SK-N-SH (cell line): ENCODE measurements at regions of chr1 and their contacts with region 1.

Region 1: GRCh38 chr1:39408641-39409054 is 82.8 kb upstream of the BMP8A start:
- DNase-seq: peak; percentile 99
- H3K4me3 ChIP-seq: peak overlapping the region; percentile 84 to 87
- H3K27ac ChIP-seq: peak overlapping the region; percentile 86 to 91
- H3K4me1 ChIP-seq: peaks cover 35 to 42% of the 10 kb centered on the region in 2 experiments
- H3K27me3 ChIP-seq: no peaks in the 10 kb centered on the region
- CTCF ChIP-seq: no peak
- EP300 ChIP-seq: no peak
- RAD21 ChIP-seq: no peak

Region 2: DNA sequence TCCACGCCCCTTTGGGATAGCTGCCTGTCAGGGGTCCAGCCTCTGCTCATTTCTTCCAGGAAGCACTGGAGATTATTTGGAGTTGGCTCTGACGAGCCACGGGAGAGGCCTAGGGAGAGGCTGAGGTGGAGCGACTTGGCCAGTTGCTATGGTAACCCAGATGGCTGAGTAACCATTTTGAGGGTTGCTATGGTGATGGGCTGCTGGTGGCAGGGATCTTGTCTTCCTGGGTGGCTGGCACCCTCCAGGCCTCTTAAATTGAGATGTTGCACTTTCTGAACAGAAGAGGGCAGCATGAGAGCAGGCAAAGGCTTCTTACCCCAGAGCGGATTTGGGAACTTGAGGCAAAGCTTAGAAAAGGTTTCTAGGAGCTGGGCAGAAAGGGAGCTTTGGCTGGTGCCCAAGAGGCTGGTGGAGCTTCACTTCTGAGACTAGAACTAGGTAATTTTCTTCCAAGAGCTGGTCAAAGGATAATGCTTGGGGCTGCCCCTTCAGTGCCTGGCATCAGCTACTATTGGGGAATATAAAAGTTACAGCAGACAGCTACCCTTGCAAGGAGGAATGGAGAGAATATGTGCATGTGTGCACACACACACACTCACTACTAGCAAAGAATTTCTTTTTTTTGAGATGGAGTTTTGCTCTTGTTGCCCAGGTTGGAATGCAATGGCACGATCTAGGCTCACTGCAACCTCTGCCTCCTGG is 309.9 kb before region 1 on chr1:
- CTCF ChIA-PET with region 1: interaction called, 19 read pairs
- POLR2A ChIA-PET with region 1: no interaction called
- DNase-seq: peak; percentile 89
- H3K4me3 ChIP-seq: peak overlapping the region in 1 of 2 experiments; percentile 30; a peak in 1 of 4 replicates
- H3K27ac ChIP-seq: peak overlapping the region in 1 of 2 experiments; percentile 60; a peak in 2 of 4 replicates
- H3K4me1 ChIP-seq: peaks cover 9 to 17% of the 10 kb centered on the region in 2 experiments
- H3K27me3 ChIP-seq: no peaks in the 10 kb centered on the region
- CTCF ChIP-seq: peak; percentile 79
- EP300 ChIP-seq: 0 out of 4 replicates have a peak, but pooled peaks of 1 of the 2 experiments have one; percentile 8
- RAD21 ChIP-seq: peak; percentile 93

Region 3: DNA sequence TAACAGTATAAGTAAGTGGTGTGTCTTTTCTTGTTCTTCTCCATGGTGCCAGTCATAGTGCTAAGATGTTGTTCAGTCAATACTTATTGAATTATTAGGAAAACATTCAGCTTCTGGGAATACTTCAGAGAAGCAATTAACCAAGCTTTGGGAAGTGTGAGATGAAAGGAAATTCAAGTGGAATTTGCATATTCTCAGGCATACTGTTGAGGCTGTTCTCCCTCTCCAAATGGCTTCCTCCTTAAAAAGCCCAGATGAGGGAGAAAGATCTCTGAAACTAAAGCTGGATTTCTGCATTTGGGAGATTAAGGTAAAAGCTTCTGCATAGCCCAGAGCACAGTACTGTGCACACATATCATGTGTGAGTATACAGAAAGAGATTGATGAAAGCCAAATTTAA is 130.8 kb before region 1 on chr1:
- CTCF ChIA-PET with region 1: interaction called, 12 read pairs
- POLR2A ChIA-PET with region 1: no interaction called
- DNase-seq: no peak
- H3K4me3 ChIP-seq: no peak overlapping the region
- H3K27ac ChIP-seq: no peak overlapping the region; a peak in 1 of 4 replicates
- H3K4me1 ChIP-seq: peaks cover 0 to 5% of the 10 kb centered on the region in 2 experiments; a peak in 1 of 4 replicates
- H3K27me3 ChIP-seq: no peaks in the 10 kb centered on the region
- CTCF ChIP-seq: no peak
- EP300 ChIP-seq: peak in 1 of 2 experiments; percentile 56; a peak in 1 of 4 replicates
- RAD21 ChIP-seq: no peak

Region 4: DNA sequence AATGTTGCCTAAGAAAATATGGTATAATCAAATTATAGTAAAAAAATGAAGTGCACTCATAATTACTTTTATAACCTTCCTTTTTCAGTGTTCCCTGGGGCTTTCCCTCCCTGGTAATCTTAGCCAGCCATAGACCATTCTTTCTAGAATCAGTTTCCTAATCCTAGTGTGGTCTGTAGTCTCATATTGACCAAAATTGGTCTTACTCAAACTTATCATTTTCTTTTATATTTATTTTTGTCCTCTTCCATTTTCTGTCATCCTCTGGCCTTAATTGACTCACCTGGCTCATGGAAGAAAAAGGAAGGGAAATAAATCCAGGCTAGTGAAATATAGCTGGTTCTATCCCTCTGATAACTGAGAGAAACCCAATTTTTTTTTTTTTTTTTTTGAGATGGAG is 11.8 kb after region 1 on chr1:
- CTCF ChIA-PET with region 1: interaction called, 19 read pairs
- POLR2A ChIA-PET with region 1: no interaction called
- DNase-seq: no peak
- H3K4me3 ChIP-seq: no peak overlapping the region
- H3K27ac ChIP-seq: peak overlapping the region in 1 of 2 experiments; percentile 15; a peak in 1 of 4 replicates
- H3K4me1 ChIP-seq: peaks cover 0 to 3% of the 10 kb centered on the region in 2 experiments; a peak in 2 of 4 replicates
- H3K27me3 ChIP-seq: no peaks in the 10 kb centered on the region
- CTCF ChIP-seq: no peak
- EP300 ChIP-seq: no peak
- RAD21 ChIP-seq: no peak

Region 5: DNA sequence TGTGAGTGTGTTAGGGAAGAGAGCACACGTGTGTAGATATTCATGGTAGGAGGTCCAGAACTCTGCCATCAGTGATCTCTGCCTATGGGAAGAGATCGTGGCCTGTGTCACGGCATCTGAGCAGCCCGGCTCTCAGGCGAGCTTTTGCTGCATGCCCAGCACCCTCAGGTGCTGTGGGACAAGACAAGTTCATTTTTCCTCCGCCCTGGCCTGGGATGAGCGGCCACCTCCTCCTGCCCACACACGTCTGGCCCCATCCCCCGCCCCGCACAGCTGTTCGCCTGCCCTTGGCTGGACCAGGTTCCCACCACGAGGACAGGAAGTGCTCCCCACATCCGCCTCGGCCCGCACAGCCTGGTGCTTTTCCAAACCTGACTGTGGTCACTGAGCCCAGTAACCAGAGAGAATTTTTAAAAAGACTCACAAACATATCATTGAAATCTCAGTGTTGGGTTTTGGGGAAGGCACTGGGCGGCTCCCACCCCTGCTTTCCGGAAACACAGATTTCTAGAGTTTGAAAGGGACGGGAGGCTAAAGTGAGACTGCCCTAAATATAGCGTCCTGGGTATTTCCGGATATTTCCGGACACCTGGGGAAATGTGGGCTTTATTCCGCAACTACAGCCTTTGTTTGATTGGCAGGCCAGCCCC is 100.8 kb after region 1 on chr1:
- CTCF ChIA-PET with region 1: no interaction called
- POLR2A ChIA-PET with region 1: no interaction called
- DNase-seq: no peak
- H3K4me3 ChIP-seq: no peak overlapping the region
- H3K27ac ChIP-seq: no peak overlapping the region
- H3K4me1 ChIP-seq: no peaks in the 10 kb centered on the region
- H3K27me3 ChIP-seq: no peaks in the 10 kb centered on the region; the same call in 1 of the 2 replicates
- CTCF ChIP-seq: no peak
- EP300 ChIP-seq: no peak
- RAD21 ChIP-seq: no peak

Region 6: DNA sequence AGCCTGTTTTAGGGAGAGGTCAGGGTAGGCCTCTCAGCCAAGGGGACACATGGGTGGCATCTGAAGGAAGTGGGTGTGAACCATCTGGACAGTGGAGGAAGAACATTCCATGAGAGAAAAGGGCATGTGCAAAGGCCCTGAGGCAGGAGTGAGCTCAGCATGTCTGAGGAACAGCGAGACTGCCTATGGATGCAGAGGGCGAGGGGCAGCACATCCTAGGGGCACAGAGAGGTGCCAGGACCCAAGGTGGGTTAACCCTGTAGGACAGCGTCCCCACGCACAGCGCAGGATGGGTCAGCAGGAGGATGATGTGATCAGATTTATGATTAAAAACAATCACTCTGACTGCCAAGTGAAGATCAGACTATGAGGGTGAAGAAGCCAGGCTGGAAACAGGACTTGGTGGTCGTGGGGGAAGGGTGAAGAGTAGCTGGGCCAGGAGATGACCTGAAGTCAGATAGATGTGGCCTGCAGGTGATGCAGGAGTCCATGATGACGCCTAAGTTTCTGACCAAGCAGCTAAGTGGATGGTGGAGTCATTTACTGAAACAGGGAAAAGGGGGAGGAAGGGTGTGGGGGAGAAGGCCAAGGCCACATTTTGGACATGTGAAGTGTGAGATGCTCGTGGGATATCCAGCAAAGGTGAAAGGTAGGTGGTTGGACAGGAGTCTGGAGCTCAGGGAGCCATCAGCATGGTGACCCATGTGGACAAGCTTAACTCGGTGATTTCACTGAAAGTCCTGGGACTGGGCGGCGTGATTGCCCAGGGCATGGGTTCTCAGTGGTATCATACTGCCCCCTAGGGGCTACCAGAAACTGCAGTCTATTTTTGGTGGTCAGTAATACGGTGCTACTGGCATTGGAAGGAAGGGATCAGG is 130.2 kb after region 1 on chr1:
- CTCF ChIA-PET with region 1: interaction called, 11 read pairs
- POLR2A ChIA-PET with region 1: no interaction called
- DNase-seq: peak; percentile 85
- H3K4me3 ChIP-seq: no peak overlapping the region; a peak in 1 of 4 replicates
- H3K27ac ChIP-seq: no peak overlapping the region
- H3K4me1 ChIP-seq: no peaks in the 10 kb centered on the region; a peak in 1 of 4 replicates
- H3K27me3 ChIP-seq: no peaks in the 10 kb centered on the region
- CTCF ChIP-seq: peak; percentile 95
- EP300 ChIP-seq: no peak
- RAD21 ChIP-seq: peak; percentile 90

Region 7: DNA sequence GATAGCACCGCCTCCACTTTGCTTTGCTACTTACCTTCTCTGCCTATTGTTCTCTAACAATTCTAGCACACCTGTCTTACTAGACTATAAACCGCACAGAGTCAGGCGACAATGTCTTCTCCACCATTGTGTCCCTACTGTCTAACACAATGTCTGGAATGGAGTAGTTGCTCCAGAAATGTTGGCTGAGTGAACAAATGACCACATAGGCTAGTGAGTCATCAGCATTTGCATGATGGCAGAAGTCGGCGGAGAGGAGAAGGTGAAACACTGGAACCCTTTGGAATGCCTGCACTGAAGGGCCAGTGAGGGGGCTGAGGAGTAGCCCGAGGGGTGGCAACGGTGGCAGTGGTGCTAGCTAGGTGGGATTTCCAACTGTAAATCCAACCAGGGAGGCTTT is 181.9 kb after region 1 on chr1:
- CTCF ChIA-PET with region 1: no interaction called
- POLR2A ChIA-PET with region 1: no interaction called
- DNase-seq: no peak
- H3K4me3 ChIP-seq: no peak overlapping the region
- H3K27ac ChIP-seq: no peak overlapping the region
- H3K4me1 ChIP-seq: no peaks in the 10 kb centered on the region
- H3K27me3 ChIP-seq: peaks cover 6% of the 10 kb centered on the region; the same call in 1 of the 2 replicates
- CTCF ChIP-seq: no peak
- EP300 ChIP-seq: no peak
- RAD21 ChIP-seq: no peak

Region 8: GRCh38 chr1:39776400-39776713 is 367.7 kb after region 1 on chr1:
- CTCF ChIA-PET with region 1: no interaction called
- POLR2A ChIA-PET with region 1: no interaction called
- DNase-seq: no peak
- H3K4me3 ChIP-seq: no peak overlapping the region
- H3K27ac ChIP-seq: no peak overlapping the region
- H3K4me1 ChIP-seq: no peaks in the 10 kb centered on the region; a peak in 1 of 4 replicates
- H3K27me3 ChIP-seq: peaks cover 6% of the 10 kb centered on the region; the same call in 1 of the 2 replicates
- CTCF ChIP-seq: no peak
- EP300 ChIP-seq: no peak
- RAD21 ChIP-seq: no peak